ENCODE measurements at regions of chr7 and their contacts with region 1.

Region 1: DNA sequence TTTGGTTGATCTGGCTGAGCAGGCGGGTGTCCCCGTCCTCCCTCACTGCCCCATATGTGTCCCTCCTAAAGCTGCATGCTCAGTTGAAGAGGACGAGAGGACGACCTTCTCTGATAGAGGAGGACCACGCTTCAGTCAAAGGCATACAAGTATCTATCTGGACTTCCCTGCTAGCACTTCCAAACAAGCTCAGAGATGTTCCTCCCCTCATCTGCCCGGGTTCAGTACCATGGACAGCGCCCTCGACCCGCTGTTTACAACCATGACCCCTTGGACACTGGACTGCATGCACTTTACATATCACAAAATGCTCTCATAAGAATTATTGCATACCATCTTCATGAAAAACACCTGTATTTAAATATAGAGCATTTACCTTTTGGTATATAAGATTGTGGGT is 26.9 kb upstream of the TRIM56 start:
- DNase-seq: peak; percentile 48 to 77 (median 73)
- H3K4me3 ChIP-seq: no peak overlapping the region
- H3K27ac ChIP-seq: no peak overlapping the region
- H3K4me1 ChIP-seq: no peaks in the 10 kb centered on the region
- H3K27me3 ChIP-seq: no peaks in the 10 kb centered on the region
- CTCF ChIP-seq: no peak
- EP300 ChIP-seq: no peak
- POLR2A ChIP-seq: no peak

Region 2: DNA sequence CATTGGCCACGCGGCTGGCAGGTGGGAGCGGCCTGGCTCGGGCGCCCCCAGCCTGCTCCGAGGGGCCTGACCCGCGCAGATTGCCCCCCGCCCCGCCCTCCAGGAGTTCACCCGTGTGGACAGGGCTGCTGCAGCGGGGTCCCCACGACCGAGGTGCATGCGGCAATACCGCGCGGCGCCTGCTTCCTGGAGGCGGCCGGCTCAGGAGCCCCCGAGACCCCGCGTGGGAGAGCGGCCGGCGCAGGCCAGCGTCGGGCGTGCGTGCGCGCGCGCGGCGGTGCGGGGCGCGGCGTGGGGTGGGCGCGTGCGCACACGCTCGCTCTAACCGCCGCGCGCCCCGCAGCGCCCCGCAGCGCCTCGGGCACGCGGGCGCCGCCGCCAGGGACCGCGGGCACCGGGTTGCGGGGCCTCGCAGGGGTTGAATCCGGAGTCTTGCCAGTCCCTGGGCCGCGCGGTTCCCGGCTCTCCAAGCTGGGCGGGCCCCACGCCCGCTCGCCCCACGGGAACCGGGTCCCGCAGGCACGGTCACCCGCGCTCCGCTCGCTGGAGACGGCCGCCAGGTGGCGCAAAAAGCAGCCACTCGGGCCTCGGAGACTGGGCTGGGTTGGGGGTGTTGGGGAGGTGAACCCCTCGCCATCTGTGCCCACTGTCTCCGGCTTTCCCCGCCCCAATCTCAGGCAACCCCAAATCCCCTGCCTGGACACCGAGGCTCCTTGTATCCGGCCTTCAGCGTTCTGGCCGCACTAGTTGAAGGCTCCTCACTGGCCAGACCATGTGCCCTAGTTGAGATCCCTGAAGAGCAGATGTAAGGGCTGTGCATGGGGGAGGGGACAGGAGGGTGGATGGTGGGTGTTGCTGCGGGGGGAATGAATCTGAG is 161.4 kb before region 1 on chr7:
- intact Hi-C with region 1: loop called (anchors 2 to 5 kb)
- DNase-seq: peak; percentile 58 to 72 (median 68)
- H3K4me3 ChIP-seq: peak overlapping the region; percentile 17
- H3K27ac ChIP-seq: no peak overlapping the region
- H3K4me1 ChIP-seq: peaks cover 5% of the 10 kb centered on the region
- H3K27me3 ChIP-seq: no peaks in the 10 kb centered on the region
- CTCF ChIP-seq: peak; percentile 38 to 73 (median 72)
- EP300 ChIP-seq: no peak
- POLR2A ChIP-seq: no peak

Region 3: DNA sequence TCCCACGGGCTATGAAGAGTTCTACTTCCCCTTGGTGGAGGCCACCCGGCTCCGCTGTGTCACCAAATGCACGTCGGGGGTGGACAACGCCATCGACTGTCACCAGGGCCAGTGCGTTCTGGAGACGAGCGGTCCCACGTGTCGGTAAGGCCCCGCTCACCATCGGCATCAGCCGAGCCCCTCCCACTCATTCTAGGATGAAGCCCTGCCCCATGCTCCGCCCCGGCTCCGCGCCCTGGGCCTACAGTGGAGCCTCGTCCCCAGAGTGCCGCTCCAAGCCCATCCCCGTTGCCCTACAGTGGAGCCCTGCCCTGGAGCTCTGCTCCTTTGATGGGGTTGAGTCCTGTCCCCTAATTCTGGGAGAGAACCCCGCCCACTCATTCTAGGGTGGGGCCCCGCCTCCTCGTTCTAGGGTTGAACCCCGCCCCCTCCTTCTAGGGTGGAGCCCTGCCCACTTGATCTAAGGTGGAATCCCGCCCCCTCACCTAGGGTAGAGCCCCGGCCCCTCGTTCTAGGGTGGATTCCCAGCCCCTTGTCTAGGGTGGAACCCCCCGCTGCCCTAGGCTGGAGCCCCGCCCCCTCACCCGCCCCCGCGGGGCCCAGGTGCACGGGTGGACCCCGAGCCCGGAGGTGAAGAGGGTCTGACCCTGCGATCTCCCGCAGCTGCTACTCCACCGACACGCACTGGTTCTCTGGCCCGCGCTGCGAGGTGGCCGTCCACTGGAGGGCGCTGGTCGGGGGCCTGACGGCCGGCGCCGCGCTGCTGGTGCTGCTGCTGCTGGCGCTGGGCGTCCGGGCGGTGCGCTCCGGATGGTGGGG is 92.4 kb before region 1 on chr7:
- intact Hi-C with region 1: loop called in 2 of 4 experiments (anchors 2 to 5 kb)
- DNase-seq: peak; percentile 31 to 74 (median 52)
- H3K4me3 ChIP-seq: peak overlapping the region; percentile 7
- H3K27ac ChIP-seq: no peak overlapping the region
- H3K4me1 ChIP-seq: peaks cover 8% of the 10 kb centered on the region
- H3K27me3 ChIP-seq: peaks cover 3% of the 10 kb centered on the region
- CTCF ChIP-seq: peak in 1 of 3 donors; percentile 36
- EP300 ChIP-seq: no peak
- POLR2A ChIP-seq: no peak

Measured in ovary (tissue), 10 donors.